Calu3 (cell line): ENCODE measurements at regions of chr15 and their contacts with region 1.

Region 1: DNA sequence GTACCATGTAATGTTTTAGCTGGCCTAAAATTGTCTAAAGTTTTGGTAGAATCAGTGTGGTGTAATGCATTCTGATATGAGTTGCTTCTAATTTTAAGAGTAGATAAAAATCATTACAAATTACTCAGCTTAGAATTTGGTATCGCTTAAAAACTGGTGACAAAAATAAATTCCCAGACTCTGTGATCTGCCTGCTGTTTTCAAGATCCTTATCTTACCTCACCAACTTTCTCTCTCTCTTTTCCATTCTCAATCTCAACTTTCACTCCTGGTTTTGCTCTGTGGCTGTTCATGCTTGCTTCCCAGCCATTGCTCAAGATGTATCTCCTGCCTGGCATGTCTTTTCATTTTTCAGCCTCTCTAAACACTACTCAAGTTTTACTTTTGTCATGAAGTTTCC is 45.7 kb downstream of the TCF12 start:
- DNase-seq: no peak
- H3K4me3 Mint-ChIP-seq: no peak overlapping the region
- H3K27ac Mint-ChIP-seq: peak overlapping the region; percentile 1
- H3K4me1 Mint-ChIP-seq: peaks cover 49% of the 10 kb centered on the region
- H3K27me3 Mint-ChIP-seq: no peaks in the 10 kb centered on the region
- CTCF ChIP-seq: no peak

Region 2: DNA sequence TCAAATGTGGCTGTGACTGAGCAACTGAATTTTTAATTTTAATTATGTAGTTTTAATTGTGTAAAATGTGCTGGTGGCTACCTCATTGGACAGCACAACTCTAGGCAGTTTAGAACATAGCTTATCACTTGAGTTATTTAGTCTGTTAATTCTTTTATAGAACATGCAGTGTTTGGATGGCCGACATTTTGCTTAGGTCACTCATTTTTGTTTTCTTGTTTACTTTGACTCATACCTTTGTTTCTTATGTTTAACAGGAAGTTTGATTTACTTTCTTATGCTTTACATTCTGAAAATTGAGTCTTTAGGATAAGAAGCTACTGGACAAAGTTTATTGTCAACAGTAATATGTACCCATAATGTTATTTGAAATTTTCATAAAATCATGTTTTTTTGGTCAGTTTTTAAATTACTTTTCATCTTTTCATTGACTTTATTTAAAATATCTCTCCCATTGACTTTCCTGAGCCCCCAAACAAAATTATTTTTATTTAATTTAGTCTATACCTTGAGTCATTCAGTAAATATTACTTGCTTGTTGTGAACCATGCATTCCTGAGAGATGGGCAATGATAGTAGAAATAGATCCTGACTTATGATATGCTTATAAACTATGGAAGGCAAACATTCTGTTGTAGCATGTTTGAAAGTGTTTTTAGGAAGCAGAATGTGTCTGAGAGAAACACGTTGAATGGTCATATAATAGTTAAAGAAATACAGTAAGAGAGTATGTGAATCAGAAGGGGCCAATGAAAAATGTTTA is 14.9 kb after region 1 on chr15:
- CTCF ChIA-PET with region 1: no interaction called
- intact Hi-C with region 1: loop called (anchors 2 kb)
- DNase-seq: no peak
- H3K4me3 Mint-ChIP-seq: no peak overlapping the region
- H3K27ac Mint-ChIP-seq: no peak overlapping the region
- H3K4me1 Mint-ChIP-seq: peaks cover 20% of the 10 kb centered on the region
- H3K27me3 Mint-ChIP-seq: no peaks in the 10 kb centered on the region
- CTCF ChIP-seq: no peak

Region 3: DNA sequence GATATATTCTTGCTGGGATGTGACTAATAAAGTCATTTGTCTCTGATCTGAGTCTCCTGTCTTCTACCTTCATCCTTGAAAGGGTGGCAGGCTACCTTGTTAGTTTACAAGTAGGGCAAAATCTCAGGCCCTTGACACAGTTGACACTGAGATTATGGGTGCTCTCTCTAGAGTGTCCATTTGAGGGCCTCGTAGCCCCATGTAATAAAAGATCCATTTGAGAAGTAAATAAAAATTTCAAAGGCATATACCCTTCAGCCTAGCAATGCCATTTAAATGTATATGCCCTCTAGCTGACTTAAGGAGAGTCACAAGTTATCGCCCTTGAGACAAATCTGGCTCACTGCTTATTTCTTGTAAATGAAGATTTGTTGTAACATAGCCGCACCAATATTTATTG is 52.8 kb after region 1 on chr15:
- CTCF ChIA-PET with region 1: no interaction called
- intact Hi-C with region 1: no loop called
- DNase-seq: no peak
- H3K4me3 Mint-ChIP-seq: no peak overlapping the region
- H3K27ac Mint-ChIP-seq: peak overlapping the region; percentile 83
- H3K4me1 Mint-ChIP-seq: peaks cover 79% of the 10 kb centered on the region
- H3K27me3 Mint-ChIP-seq: no peaks in the 10 kb centered on the region
- CTCF ChIP-seq: no peak

Region 4: DNA sequence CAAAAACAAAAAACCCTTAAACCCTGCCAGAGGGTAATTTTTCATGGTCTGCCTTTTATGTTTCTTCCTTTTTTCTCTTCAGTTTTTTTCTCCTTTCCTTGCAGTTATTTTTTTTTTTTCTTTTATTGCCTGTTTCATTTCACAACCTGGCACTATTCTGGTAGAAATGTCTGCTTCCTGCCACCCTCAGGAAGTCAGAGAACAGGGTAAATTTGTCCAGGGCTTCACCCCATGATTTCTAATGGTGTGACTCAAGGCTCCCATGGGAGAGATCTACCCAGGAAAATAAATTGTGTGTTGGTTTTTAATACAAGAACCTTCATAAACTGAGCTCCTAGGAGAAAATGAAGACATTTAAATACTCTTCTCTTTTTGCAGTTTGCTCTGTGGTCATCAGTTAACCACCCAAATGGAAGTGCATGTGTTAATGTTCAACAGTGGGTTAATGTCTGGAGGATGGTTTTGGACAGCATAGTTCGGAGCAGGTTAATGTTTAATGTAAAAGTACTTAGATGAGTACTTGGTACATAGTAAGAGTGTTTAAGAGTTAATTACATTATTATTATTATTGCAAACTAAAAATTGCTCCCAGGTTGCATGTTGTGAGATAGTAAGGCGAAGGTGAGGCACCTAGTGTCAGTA is 458.1 kb after region 1 on chr15:
- CTCF ChIA-PET with region 1: no interaction called
- intact Hi-C with region 1: no loop called
- DNase-seq: no peak
- H3K4me3 Mint-ChIP-seq: no peak overlapping the region
- H3K27ac Mint-ChIP-seq: no peak overlapping the region
- H3K4me1 Mint-ChIP-seq: peaks cover 13% of the 10 kb centered on the region
- H3K27me3 Mint-ChIP-seq: peaks cover 13% of the 10 kb centered on the region
- CTCF ChIP-seq: no peak